ENCODE measurements at regions of chr17 and their contacts with region 1.

Region 1: GRCh38 chr17:59331129-59331928 is at the start of gene YPEL2:
- DNase-seq: peak; percentile 93
- ATAC-seq: peak; percentile 97
- H3K4me3 ChIP-seq: peak within 1 kb of the TSS; percentile 82
- H3K27ac ChIP-seq: no peak within 1 kb of the TSS
- H3K4me1 ChIP-seq: peaks cover 21% of the 10 kb centered on the region
- H3K27me3 ChIP-seq: peaks cover 16% of the 10 kb centered on the region
- CTCF ChIP-seq: no peak
- total RNA-seq, gene YPEL2: 0.47 and 1.1 TPM in 2 replicates

Region 2: DNA sequence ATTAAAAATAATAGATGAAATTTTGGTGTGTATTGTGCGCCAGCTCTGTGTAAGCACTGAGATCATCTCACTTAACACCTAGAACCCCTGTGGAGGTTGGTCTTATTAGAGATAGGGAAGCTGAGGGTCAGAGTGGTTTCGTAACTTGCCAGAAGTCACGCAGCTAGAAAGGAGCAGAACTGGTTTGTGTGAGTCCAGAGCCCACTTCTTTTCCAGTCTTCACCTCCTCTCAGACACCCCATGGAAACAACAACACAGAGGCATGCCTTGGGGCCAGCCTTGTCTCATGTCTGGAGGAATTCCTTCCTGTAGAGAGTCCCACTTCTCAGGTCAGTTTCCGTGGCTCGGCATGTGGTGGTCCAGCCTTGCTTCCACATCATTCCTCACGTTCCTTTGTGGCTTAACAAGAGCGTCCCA is 16.7 kb after region 1 on chr17:
- CTCF ChIA-PET with region 1: interaction called, 5 read pairs
- POLR2A ChIA-PET with region 1: interaction called, 17 read pairs
- intact Hi-C with region 1: no loop called
- DNase-seq: no peak
- ATAC-seq: no peak
- H3K4me3 ChIP-seq: no peak overlapping the region
- H3K27ac ChIP-seq: no peak overlapping the region
- H3K4me1 ChIP-seq: no peaks in the 10 kb centered on the region
- H3K27me3 ChIP-seq: no peaks in the 10 kb centered on the region
- CTCF ChIP-seq: no peak

Region 3: DNA sequence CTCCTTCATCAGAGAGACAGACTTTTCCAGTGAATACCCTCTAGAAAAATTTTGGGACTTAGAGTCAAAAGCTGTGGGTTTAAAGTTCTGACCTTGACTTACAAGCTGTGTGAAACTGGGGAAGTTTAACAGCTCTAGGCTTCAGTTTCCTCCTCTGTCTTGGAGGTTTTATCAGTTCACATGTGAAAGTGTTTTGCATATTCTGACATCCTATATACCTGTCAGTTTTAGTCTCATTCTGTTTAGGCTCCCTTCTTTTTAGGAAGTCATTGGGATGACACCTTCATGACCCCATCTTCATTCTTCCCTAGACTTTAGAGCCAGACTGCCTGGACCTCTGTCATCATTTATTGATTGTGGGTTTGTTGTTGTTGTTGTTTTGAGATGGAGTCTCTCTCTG is 44.5 kb after region 1 on chr17:
- CTCF ChIA-PET with region 1: interaction called, 14 read pairs
- POLR2A ChIA-PET with region 1: no interaction called
- intact Hi-C with region 1: no loop called
- DNase-seq: no peak
- ATAC-seq: no peak
- H3K4me3 ChIP-seq: no peak overlapping the region
- H3K27ac ChIP-seq: no peak overlapping the region
- H3K4me1 ChIP-seq: peaks cover 9% of the 10 kb centered on the region; the same call in 1 of the 2 replicates
- H3K27me3 ChIP-seq: no peaks in the 10 kb centered on the region
- CTCF ChIP-seq: no peak

Region 4: DNA sequence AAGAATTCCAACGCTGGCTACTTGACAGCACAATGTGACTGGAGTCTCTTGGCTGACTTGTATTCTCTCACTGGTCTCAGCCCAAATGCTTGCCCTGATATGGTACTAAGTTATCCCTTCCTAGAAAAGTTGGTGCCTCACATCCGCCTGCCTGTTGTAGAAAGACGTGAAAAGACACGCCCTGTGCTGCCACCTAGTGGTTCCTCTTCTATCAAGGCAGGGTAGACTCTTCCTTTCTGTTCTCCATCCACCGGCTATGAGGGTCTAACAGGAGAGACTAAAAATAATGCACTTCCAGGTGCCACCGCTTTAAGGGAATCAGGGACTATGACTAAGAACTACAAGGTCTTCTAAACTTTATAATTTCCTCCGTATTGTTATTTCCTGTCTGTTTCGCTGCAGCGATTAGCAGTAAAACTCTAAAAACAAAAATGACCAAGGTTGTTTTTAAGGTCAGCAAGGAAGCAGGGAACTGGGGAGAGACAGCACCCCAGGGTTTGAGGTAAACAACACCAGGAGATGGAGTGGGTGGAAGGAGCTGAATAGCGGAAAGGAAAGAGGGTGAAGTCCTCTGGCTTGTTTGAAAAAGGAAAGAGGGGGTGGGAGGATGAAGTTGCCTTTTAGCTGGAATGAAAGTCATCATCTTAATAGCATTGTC is 109.6 kb after region 1 on chr17:
- CTCF ChIA-PET with region 1: interaction called, 14 read pairs
- POLR2A ChIA-PET with region 1: no interaction called
- intact Hi-C with region 1: loop called (anchors 1 kb)
- DNase-seq: peak; percentile 95
- ATAC-seq: peak; percentile 100
- H3K4me3 ChIP-seq: no peak overlapping the region
- H3K27ac ChIP-seq: no peak overlapping the region
- H3K4me1 ChIP-seq: no peaks in the 10 kb centered on the region
- H3K27me3 ChIP-seq: no peaks in the 10 kb centered on the region
- CTCF ChIP-seq: peak; percentile 97